BJ (cell line): ENCODE measurements at regions of chr10 and their contacts with region 1.

Region 1: DNA sequence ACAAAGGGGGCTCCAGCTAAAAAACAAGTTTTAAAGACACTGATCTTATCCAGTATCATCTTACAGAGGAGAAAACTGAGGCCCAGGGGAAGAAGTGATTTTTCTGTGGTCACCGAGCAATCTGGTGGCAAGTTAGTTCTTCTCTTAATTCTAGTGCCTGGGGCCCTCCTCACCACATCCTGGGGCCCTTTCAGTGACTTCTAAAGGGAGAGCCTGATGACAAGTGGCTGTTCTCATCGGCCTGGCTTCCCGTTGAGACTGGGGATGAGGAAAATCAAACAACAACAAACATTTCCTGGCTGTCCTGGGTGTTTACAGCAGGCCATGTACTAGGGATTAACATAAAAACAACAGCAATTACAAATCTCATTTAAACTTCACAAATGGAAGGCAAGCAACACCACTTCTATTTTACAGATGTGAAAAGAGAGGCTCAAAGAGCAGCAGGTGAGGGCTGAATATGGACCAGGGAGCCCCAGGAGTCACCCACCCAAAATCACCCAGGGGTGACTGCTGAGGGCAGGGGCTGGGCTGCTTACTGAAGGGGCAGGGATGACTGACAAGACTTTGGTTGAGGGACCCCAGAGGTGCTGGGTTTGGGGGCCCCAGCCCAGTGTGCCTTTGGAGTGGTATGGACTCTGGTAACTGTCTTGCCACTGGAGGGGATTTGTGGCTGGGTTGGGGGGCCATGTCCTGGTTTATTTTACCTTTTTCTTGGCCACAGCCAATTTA is 24.7 kb upstream of the MTPAP start:
- DNase-seq: no peak
- H3K4me3 ChIP-seq: no peak overlapping the region
- H3K27me3 ChIP-seq: peaks cover 14% of the 10 kb centered on the region
- CTCF ChIP-seq: no peak

Region 2: GRCh38 chr10:30070001-30070685 is 303.6 kb before region 1 on chr10:
- CTCF ChIA-PET with region 1: no interaction called
- POLR2A ChIA-PET with region 1: no interaction called
- DNase-seq: peak; percentile 56
- H3K4me3 ChIP-seq: no peak overlapping the region
- H3K27me3 ChIP-seq: 0 out of 2 replicates have a peak, but pooled peaks cover 2% of the 10 kb centered on the region
- CTCF ChIP-seq: no peak

Region 3: GRCh38 chr10:30359373-30360206 is 14.2 kb before region 1 on chr10:
- CTCF ChIA-PET with region 1: interaction called, 23 read pairs
- POLR2A ChIA-PET with region 1: no interaction called
- DNase-seq: no peak
- H3K4me3 ChIP-seq: no peak overlapping the region
- H3K27me3 ChIP-seq: 0 out of 2 replicates have a peak, but pooled peaks cover 2% of the 10 kb centered on the region
- CTCF ChIP-seq: peak; percentile 91

Region 4: DNA sequence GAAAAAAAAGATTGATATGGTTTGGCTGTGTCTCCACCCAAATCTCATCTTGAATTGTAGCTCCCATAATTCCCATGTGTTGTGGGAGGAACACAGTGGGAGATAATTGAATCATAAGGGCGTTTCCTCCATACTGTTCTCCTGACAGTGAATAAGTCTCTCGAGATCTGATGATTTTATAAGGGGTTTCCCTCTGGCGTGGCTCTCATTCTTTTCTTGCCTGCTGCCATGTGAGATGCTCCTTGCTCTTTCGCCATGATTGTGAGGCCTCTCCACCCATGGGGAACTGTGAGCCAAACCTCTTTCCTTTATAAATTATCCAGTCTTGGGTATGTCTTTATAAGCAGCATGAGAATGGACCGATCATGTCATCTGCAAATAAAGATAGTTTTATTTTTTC is 30.8 kb after region 1 on chr10:
- CTCF ChIA-PET with region 1: no interaction called
- POLR2A ChIA-PET with region 1: no interaction called
- DNase-seq: no peak
- H3K4me3 ChIP-seq: no peak overlapping the region
- H3K27me3 ChIP-seq: peaks cover 3% of the 10 kb centered on the region; the same call in 1 of the 2 replicates
- CTCF ChIP-seq: no peak

Region 5: DNA sequence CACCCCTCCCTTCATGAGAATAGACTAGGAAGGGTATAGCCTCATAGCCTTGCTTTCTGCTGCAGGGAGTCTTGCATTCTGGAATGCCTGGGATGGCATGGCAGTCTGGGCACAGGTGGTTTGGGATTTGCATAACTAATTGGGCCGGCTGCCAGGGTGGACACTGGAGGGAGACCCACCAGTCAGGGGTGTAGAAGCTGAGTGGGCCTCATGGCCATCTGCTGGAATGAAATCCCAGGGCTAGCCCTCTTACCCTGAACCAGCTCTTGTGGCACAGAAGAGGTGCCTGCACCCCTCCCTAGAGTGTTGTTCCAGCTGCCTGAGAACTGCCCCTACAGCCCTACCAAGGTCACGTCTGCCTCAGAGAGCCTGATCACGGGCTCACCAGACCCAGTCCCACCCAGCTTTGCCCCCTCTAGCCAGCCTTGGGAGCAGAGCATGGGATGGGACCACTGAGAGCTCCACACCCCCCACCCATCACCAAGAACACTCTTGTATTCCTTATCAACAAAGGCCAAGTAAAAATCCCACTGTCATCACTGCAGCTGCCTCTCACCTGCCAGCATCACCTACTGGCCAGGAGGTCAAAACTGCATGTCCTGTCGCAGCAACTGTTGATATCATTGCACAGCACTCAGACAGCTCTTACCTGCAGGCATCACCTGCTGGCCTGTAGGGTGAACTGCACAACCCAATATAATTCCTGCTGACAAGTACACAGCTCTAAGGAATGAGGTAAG is 1094.2 kb after region 1 on chr10:
- CTCF ChIA-PET with region 1: no interaction called
- POLR2A ChIA-PET with region 1: no interaction called
- DNase-seq: no peak
- H3K4me3 ChIP-seq: no peak overlapping the region
- H3K27me3 ChIP-seq: no peaks in the 10 kb centered on the region
- CTCF ChIP-seq: peak; percentile 13; the same call in 1 of the 2 replicates